ENCODE measurements at regions of chr6 and their contacts with region 1.

Region 1: DNA sequence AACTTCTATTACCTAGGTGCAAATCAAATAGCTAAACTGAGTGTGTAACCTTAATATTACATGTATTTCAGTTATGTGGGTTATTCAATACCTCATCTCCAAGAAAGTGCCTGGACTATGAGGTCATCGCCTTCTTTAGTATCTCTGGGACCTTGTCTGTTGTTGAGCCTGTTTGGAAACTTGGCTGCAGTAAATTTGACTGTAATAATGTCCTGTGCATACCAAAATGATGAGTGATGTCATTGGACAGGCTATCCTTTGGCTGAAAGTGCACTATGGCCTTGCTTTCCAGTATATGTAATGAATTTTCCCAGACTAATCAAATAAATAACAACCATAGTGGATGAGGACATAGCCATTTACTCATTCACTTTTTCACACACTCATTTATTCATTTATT is 455.1 kb downstream of the ADGRB3 start:
- DNase-seq: peak; percentile 43
- H3K4me3 Mint-ChIP-seq: no peak overlapping the region
- H3K27ac Mint-ChIP-seq: no peak overlapping the region
- H3K4me1 Mint-ChIP-seq: peaks cover 12% of the 10 kb centered on the region
- H3K27me3 Mint-ChIP-seq: no peaks in the 10 kb centered on the region
- CTCF ChIP-seq: no peak

Region 2: GRCh38 chr6:69064226-69064625 is 25.9 kb before region 1 on chr6:
- CTCF ChIA-PET with region 1: no interaction called
- intact Hi-C with region 1: loop called (anchors 2 kb)
- DNase-seq: no peak
- H3K4me3 Mint-ChIP-seq: no peak overlapping the region
- H3K27ac Mint-ChIP-seq: peak overlapping the region; percentile 39
- H3K4me1 Mint-ChIP-seq: no peaks in the 10 kb centered on the region
- H3K27me3 Mint-ChIP-seq: no peaks in the 10 kb centered on the region
- CTCF ChIP-seq: no peak

Region 3: GRCh38 chr6:69105288-69105687 is 15.2 kb after region 1 on chr6:
- CTCF ChIA-PET with region 1: no interaction called
- intact Hi-C with region 1: no loop called
- DNase-seq: peak; percentile 39
- H3K4me3 Mint-ChIP-seq: no peak overlapping the region
- H3K27ac Mint-ChIP-seq: no peak overlapping the region
- H3K4me1 Mint-ChIP-seq: peaks cover 10% of the 10 kb centered on the region
- H3K27me3 Mint-ChIP-seq: no peaks in the 10 kb centered on the region
- CTCF ChIP-seq: no peak

Measured in Calu3 (cell line).